GM23248 (cell line): ENCODE measurements at regions of chr12 and their contacts with region 1.

Region 1: DNA sequence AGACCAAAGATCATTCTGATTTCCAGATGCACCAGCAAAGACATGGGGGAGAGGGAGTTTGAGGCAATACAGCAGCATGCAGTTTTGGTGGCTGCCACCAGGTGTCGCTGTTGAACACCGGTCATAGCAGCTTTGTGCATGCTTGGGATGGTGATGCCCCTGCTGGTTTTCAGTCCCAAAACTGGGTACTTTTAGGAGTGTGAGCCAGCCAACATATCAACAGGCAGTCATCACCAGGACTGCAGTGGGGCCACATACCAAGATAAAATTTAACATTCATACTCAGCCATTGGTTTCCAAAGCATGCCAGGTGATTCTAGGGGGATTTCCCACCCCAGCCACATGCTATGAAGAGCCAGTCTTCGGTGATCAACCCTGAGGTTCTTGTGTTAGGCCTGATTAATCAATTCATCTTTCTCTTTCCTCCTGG is 64.2 kb downstream of the PHETA1 start:
- DNase-seq: no peak
- H3K4me3 ChIP-seq: no peak overlapping the region
- H3K27ac ChIP-seq: no peak overlapping the region
- H3K4me1 ChIP-seq: no peaks in the 10 kb centered on the region
- H3K27me3 ChIP-seq: 0 out of 2 replicates have a peak, but pooled peaks cover 7% of the 10 kb centered on the region

Region 2: DNA sequence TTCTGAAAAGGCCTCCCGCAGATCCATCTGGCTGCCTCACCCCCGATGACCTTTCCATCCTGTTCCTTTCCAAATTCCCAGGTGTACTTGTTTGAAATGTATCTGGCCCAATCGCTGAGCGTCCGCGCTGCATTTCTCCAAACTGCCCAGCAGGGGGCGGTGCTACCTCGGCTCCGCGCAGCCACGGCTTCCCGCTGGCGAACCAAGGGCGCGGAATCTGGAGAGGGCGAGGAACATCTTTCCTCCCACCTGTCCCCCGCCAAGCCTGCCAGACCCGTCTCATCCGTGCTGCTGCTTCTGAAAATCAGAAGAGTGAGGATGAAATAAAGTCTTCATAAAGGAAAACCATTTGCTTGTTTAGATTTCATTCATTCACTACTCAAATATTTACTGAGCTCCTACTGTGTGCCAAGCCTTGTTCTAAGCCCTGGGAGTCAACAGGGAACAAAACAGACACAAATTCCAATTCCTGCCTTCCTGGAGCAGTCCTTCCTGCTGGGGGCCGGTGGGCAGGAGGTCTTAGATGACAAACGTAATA is 367.5 kb before region 1 on chr12:
- in situ Hi-C with region 1: loop called (anchors 10 kb)
- DNase-seq: peak; percentile 66
- H3K4me3 ChIP-seq: no peak overlapping the region
- H3K27ac ChIP-seq: no peak overlapping the region
- H3K4me1 ChIP-seq: no peaks in the 10 kb centered on the region
- H3K27me3 ChIP-seq: peaks cover 31% of the 10 kb centered on the region

Region 3: GRCh38 chr12:110966081-110966760 is 338.4 kb before region 1 on chr12:
- in situ Hi-C with region 1: no loop called
- DNase-seq: peak; percentile 10
- H3K4me3 ChIP-seq: no peak overlapping the region
- H3K27ac ChIP-seq: no peak overlapping the region
- H3K4me1 ChIP-seq: no peaks in the 10 kb centered on the region
- H3K27me3 ChIP-seq: peaks cover 35% of the 10 kb centered on the region

Region 4: GRCh38 chr12:111056618-111057521 is 247.8 kb before region 1 on chr12:
- in situ Hi-C with region 1: no loop called
- DNase-seq: no peak
- H3K4me3 ChIP-seq: no peak overlapping the region
- H3K27ac ChIP-seq: no peak overlapping the region
- H3K4me1 ChIP-seq: no peaks in the 10 kb centered on the region
- H3K27me3 ChIP-seq: peaks cover 7% of the 10 kb centered on the region; the same call in 1 of the 2 replicates